ENCODE measurements at regions of chr11 and their contacts with region 1.

Region 1: GRCh38 chr11:94767761-94768601 is at the start of gene AMOTL1:
- DNase-seq: peak; percentile 69
- ATAC-seq: peak; percentile 90
- H3K4me3 Mint-ChIP-seq: peak within 1 kb of the TSS; percentile 69
- H3K27ac Mint-ChIP-seq: no peak within 1 kb of the TSS
- H3K4me1 Mint-ChIP-seq: peaks cover 10% of the 10 kb centered on the region
- H3K27me3 Mint-ChIP-seq: peaks cover 35% of the 10 kb centered on the region
- CTCF ChIP-seq: no peak
- total RNA-seq, gene AMOTL1: 1.5 to 1.7 TPM

Region 2: GRCh38 chr11:94445641-94446040 is 322.3 kb before region 1 on chr11:
- CTCF ChIA-PET with region 1: no interaction called
- POLR2A ChIA-PET with region 1: no interaction called
- intact Hi-C with region 1: no loop called
- DNase-seq: no peak
- ATAC-seq: no peak
- H3K4me3 Mint-ChIP-seq: no peak overlapping the region
- H3K27ac Mint-ChIP-seq: no peak overlapping the region
- H3K4me1 Mint-ChIP-seq: no peaks in the 10 kb centered on the region
- H3K27me3 Mint-ChIP-seq: no peaks in the 10 kb centered on the region
- CTCF ChIP-seq: no peak

Region 3: GRCh38 chr11:94511932-94512781 is 255.8 kb before region 1 on chr11 and contains the start of gene C11orf97:
- CTCF ChIA-PET with region 1: no interaction called
- POLR2A ChIA-PET with region 1: no interaction called
- intact Hi-C with region 1: loop called (anchors 10 kb)
- DNase-seq: peak; percentile 68
- ATAC-seq: peak; percentile 89
- H3K4me3 Mint-ChIP-seq: peak within 1 kb of the TSS; percentile 65
- H3K27ac Mint-ChIP-seq: no peak within 1 kb of the TSS
- H3K4me1 Mint-ChIP-seq: peaks cover 16% of the 10 kb centered on the region
- H3K27me3 Mint-ChIP-seq: peaks cover 4% of the 10 kb centered on the region
- CTCF ChIP-seq: no peak
- total RNA-seq, gene C11orf97: not detected

Region 4: DNA sequence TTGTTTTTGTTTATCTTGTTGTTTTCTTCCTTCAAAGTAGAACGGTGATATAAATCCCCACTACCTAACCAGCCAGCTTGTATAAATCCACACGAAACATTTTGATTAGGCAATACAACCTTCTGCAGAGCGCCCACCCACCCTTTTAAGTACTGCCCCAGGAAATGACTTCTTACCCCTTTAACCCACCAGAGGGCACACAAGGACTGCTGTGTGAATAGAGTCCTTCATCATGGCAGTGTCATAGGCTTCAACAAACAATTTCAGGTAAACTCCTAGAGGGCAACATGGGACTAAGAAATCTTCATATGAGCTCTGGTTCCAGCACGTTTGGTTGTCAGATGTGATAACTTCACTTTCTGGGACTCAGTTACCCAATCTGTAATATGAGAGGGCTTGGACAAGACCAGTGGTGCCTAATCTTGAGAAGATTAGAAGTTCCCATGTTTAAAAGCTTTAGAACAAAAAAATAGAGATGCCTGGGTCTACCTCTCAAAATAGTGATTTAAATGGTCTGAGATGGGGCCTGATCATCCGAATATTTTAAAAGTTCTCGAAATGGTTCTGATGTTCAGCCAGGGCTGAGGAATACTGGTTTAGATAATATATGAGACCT is 144.8 kb before region 1 on chr11:
- CTCF ChIA-PET with region 1: no interaction called
- POLR2A ChIA-PET with region 1: no interaction called
- intact Hi-C with region 1: loop called (anchors 10 kb)
- DNase-seq: peak; percentile 70
- ATAC-seq: peak; percentile 90
- H3K4me3 Mint-ChIP-seq: no peak overlapping the region
- H3K27ac Mint-ChIP-seq: no peak overlapping the region
- H3K4me1 Mint-ChIP-seq: no peaks in the 10 kb centered on the region
- H3K27me3 Mint-ChIP-seq: peaks cover 8% of the 10 kb centered on the region
- CTCF ChIP-seq: peak; percentile 56

Region 5: DNA sequence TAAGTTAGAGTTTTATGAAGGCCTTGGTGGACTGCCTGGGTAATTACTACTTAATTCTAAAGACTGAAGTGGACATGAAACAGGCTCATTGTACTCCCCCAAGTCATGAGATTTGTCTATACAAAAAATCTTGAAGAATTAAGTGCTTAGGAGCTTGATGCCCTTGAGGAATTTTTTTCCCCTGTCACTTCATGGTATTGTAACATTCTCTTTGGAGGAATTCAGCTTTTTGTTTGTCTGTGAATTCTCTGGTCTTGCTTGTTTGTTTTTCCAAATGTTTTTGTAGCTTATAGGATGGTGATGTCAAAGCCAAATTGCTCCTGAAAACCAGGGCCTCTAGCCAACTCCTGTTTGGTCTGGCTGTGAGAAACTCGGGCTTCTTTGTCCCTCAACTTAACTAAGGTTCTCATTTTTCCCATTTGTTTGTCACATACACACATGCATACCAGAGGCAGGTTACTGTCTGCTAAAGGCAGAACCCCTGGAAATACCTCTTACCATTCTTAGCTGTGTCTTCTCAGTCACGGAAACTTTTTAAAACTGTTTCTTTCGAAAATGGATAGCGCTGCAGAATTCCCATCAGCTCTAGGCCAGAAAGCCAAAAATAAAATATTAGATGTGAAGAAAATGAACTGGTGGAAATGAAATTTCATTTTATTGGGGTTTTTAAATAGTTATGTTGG is 67.1 kb after region 1 on chr11:
- CTCF ChIA-PET with region 1: no interaction called
- POLR2A ChIA-PET with region 1: no interaction called
- intact Hi-C with region 1: no loop called
- DNase-seq: no peak
- ATAC-seq: no peak
- H3K4me3 Mint-ChIP-seq: no peak overlapping the region
- H3K27ac Mint-ChIP-seq: no peak overlapping the region
- H3K4me1 Mint-ChIP-seq: no peaks in the 10 kb centered on the region
- H3K27me3 Mint-ChIP-seq: peaks cover 1% of the 10 kb centered on the region
- CTCF ChIP-seq: no peak